SK-N-SH (cell line): ENCODE measurements at regions of chr20 and their contacts with region 1.

Region 1: DNA sequence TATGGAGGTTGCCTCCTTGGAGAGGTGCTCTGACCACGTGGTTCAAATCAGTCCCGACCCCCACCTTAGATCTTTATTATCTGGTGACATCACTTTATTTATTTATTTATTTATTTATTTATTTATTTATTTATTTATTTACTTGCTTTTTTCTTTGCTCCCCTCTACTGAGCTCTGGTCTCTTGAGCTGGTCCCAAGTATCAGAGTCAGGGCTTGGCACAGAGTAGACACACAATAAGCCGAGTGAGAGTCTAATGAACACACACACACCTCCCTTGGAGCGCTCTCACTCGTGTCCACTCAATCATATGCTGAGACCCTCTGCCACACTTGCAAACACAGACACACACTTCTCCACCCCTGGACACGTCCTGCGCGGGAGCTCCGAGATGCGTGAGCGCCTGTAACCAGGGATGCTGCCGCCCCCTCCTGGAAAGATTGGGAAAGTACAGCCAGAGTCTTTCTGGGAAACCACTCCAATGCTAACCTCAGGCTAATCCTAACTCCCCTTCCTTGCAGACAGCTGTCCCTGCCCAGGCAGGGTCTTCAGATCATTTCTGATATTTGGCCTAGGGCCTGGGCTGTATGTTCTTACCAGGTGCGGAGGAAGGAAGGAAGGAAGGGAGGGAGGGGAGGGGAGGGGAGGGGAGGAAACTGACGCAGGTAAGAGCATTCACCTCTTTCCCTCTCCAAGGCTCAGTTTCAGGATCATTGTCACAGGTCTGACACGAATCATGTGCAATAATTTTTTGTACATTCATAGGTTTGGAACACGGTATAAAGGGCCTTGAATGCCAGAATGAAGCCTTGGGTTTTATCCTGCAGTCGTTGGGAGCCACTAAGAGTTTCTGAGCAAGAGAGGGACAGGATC is 70.9 kb downstream of the STK35 start:
- DNase-seq: peak; percentile 82
- H3K4me3 ChIP-seq: no peak overlapping the region; a peak in 1 of 4 replicates
- H3K27ac ChIP-seq: no peak overlapping the region
- H3K4me1 ChIP-seq: peaks cover 0 to 2% of the 10 kb centered on the region in 2 experiments; a peak in 1 of 4 replicates
- H3K27me3 ChIP-seq: peaks cover 9% of the 10 kb centered on the region
- CTCF ChIP-seq: peak; percentile 92
- EP300 ChIP-seq: no peak
- RAD21 ChIP-seq: peak; percentile 94

Region 2: GRCh38 chr20:1764136-1765033 is 408.2 kb before region 1 on chr20:
- CTCF ChIA-PET with region 1: interaction called, 30 read pairs
- POLR2A ChIA-PET with region 1: no interaction called
- DNase-seq: peak; percentile 65
- H3K4me3 ChIP-seq: no peak overlapping the region; a peak in 1 of 4 replicates
- H3K27ac ChIP-seq: no peak overlapping the region
- H3K4me1 ChIP-seq: peaks cover 6 to 13% of the 10 kb centered on the region in 2 experiments; a peak in 3 of 4 replicates
- H3K27me3 ChIP-seq: no peaks in the 10 kb centered on the region
- CTCF ChIP-seq: peak; percentile 86
- EP300 ChIP-seq: no peak
- RAD21 ChIP-seq: peak; percentile 82

Region 3: GRCh38 chr20:1900321-1900801 is 272.2 kb before region 1 on chr20:
- CTCF ChIA-PET with region 1: interaction called, 14 read pairs
- POLR2A ChIA-PET with region 1: no interaction called
- DNase-seq: peak; percentile 86
- H3K4me3 ChIP-seq: no peak overlapping the region
- H3K27ac ChIP-seq: no peak overlapping the region; a peak in 1 of 4 replicates
- H3K4me1 ChIP-seq: peaks cover 13 to 32% of the 10 kb centered on the region in 2 experiments; a peak in 1 of 4 replicates
- H3K27me3 ChIP-seq: no peaks in the 10 kb centered on the region
- CTCF ChIP-seq: peak; percentile 66
- EP300 ChIP-seq: no peak
- RAD21 ChIP-seq: peak; percentile 67

Region 4: GRCh38 chr20:1926237-1926636 is 246.3 kb before region 1 on chr20:
- CTCF ChIA-PET with region 1: no interaction called
- POLR2A ChIA-PET with region 1: no interaction called
- DNase-seq: no peak
- H3K4me3 ChIP-seq: no peak overlapping the region
- H3K27ac ChIP-seq: no peak overlapping the region
- H3K4me1 ChIP-seq: peaks cover 0 to 11% of the 10 kb centered on the region in 2 experiments; a peak in 1 of 4 replicates
- H3K27me3 ChIP-seq: no peaks in the 10 kb centered on the region
- CTCF ChIP-seq: no peak
- EP300 ChIP-seq: no peak
- RAD21 ChIP-seq: no peak

Region 5: DNA sequence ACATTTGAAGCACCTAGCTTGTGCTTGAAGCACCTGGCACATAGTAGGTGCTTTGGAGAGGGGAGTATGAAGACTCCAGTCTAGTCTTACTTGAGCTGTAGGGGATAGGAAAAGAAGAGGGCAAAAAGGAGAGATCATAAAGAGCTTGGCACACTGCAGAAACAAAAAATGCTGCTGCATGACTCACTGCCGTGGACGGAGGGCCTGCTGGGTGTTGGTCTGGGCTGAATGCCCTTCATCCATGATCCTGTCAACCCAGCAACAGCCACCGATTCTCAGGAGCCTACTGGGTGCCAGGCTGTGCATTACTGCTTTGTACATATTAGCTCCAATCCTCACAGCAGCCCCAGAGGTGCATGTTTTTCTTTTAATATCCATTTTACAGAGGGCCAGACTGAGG is 184.7 kb before region 1 on chr20:
- CTCF ChIA-PET with region 1: interaction called, 13 read pairs
- POLR2A ChIA-PET with region 1: no interaction called
- DNase-seq: no peak
- H3K4me3 ChIP-seq: no peak overlapping the region
- H3K27ac ChIP-seq: no peak overlapping the region
- H3K4me1 ChIP-seq: no peaks in the 10 kb centered on the region
- H3K27me3 ChIP-seq: peaks cover 43% of the 10 kb centered on the region
- CTCF ChIP-seq: no peak
- EP300 ChIP-seq: no peak
- RAD21 ChIP-seq: no peak

Region 6: DNA sequence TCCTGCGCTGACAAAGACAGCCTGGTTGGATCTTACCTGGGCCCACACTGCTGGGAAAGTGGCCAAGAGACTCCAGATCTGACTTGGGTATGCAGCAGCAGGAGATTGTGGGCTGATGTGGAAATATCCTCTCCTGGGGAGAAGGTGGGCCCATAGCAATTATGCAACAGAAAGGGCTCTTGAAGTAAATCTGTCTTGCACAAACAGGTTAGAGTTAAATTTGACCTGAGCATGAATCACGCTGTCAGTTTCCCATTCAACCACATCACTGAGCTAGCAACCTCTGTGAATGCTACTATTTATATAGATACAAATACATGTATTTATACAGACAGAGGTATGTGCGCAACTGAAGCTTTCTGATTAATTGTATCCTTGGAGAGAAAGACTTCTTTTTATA is 150.4 kb before region 1 on chr20:
- CTCF ChIA-PET with region 1: interaction called, 10 read pairs
- POLR2A ChIA-PET with region 1: no interaction called
- DNase-seq: no peak
- H3K4me3 ChIP-seq: no peak overlapping the region
- H3K27ac ChIP-seq: no peak overlapping the region
- H3K4me1 ChIP-seq: no peaks in the 10 kb centered on the region
- H3K27me3 ChIP-seq: no peaks in the 10 kb centered on the region; the same call in 1 of the 2 replicates
- CTCF ChIP-seq: no peak
- EP300 ChIP-seq: no peak
- RAD21 ChIP-seq: no peak

Region 7: DNA sequence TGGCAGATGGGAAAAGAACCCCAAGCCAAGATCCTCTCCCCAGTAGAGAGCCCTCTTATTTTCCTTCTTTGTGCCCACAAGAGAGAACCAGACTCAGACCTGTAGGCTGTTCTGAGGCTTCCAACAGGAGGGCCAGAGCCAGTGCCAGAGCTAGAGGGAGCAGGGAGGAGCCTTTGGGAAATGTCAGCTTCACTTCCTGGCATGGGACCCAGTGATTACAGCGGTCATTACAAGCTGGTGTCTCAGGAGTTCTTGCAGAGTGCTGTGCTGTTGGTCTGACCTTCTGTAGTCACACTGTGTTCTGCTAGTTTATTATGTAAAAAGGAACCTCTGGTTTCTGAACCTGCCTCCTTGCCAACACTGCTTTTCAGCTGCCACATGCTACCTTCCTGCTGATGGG is 32.0 kb before region 1 on chr20:
- CTCF ChIA-PET with region 1: interaction called, 17 read pairs
- POLR2A ChIA-PET with region 1: no interaction called
- DNase-seq: no peak
- H3K4me3 ChIP-seq: no peak overlapping the region
- H3K27ac ChIP-seq: no peak overlapping the region; a peak in 1 of 4 replicates
- H3K4me1 ChIP-seq: peaks cover 10 to 29% of the 10 kb centered on the region in 2 experiments; a peak in 3 of 4 replicates
- H3K27me3 ChIP-seq: no peaks in the 10 kb centered on the region
- CTCF ChIP-seq: no peak
- EP300 ChIP-seq: no peak
- RAD21 ChIP-seq: no peak

Region 8: DNA sequence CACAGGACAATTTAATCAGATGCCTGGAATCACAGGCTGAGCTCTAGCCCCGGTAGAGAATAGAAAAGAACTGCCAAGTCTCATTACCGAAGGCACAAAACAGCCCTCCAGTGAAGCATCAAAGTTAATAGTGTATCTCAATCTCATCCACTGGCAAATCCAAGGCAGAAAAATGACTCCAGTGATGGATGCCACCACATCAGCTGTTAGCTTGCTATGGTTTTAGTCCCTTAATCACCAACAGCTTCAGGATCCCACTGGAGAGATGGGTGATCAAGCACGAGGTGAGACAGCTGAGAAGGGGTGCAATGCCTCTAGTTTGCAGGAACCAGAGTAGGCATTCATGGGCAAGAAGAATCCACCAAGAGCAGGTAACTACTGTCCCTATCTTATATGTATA is 10.8 kb after region 1 on chr20:
- CTCF ChIA-PET with region 1: interaction called, 35 read pairs
- POLR2A ChIA-PET with region 1: no interaction called
- DNase-seq: no peak
- H3K4me3 ChIP-seq: no peak overlapping the region
- H3K27ac ChIP-seq: no peak overlapping the region
- H3K4me1 ChIP-seq: no peaks in the 10 kb centered on the region; a peak in 1 of 4 replicates
- H3K27me3 ChIP-seq: no peaks in the 10 kb centered on the region
- CTCF ChIP-seq: no peak
- EP300 ChIP-seq: no peak
- RAD21 ChIP-seq: no peak